ENCODE measurements at regions of chr19 and their contacts with region 1.

Region 1: GRCh38 chr19:54464630-54465266 is 1.2 kb upstream of the LENG9 start:
- DNase-seq: peak; percentile 91 to 96
- H3K4me3 ChIP-seq: peak overlapping the region; percentile 62 to 85
- H3K27ac ChIP-seq: peak overlapping the region; percentile 92 to 99
- H3K4me1 ChIP-seq: peaks cover 6 to 37% (median 23%) of the 10 kb centered on the region in 4 donors
- H3K27me3 ChIP-seq: no peaks in the 10 kb centered on the region
- CTCF ChIP-seq: peak in 1 of 2 experiments; percentile 8

Region 2: GRCh38 chr19:55117636-55118391 is 653.1 kb after region 1 on chr19 and contains the start of gene PPP1R12C:
- intact Hi-C with region 1: loop called (anchors 5 kb)
- DNase-seq: peak; percentile 99
- H3K4me3 ChIP-seq: peak within 1 kb of the TSS; percentile 83 to 87
- H3K27ac ChIP-seq: peak within 1 kb of the TSS; percentile 88 to 92
- H3K4me1 ChIP-seq: peaks cover 0 to 49% (median 41%) of the 10 kb centered on the region in 4 donors
- H3K27me3 ChIP-seq: no peaks in the 10 kb centered on the region
- CTCF ChIP-seq: peak in 1 of 2 experiments; percentile 7

Measured in tibial artery (tissue), 4 donors.